SK-N-SH (cell line): ENCODE measurements at regions of chr6 and their contacts with region 1.

Region 1: GRCh38 chr6:112043032-112044007 is 10.6 kb upstream of the CCN6 start:
- DNase-seq: peak; percentile 93
- H3K4me3 ChIP-seq: peak overlapping the region; percentile 68 to 76
- H3K27ac ChIP-seq: peak overlapping the region; percentile 96
- H3K4me1 ChIP-seq: peaks cover 6 to 17% of the 10 kb centered on the region in 2 experiments
- H3K27me3 ChIP-seq: no peaks in the 10 kb centered on the region
- CTCF ChIP-seq: peak; percentile 98
- EP300 ChIP-seq: no peak
- RAD21 ChIP-seq: peak; percentile 97

Region 2: GRCh38 chr6:111691345-111692225 is 351.7 kb before region 1 on chr6:
- CTCF ChIA-PET with region 1: interaction called, 14 read pairs
- POLR2A ChIA-PET with region 1: no interaction called
- DNase-seq: peak; percentile 76
- H3K4me3 ChIP-seq: no peak overlapping the region
- H3K27ac ChIP-seq: peak overlapping the region in 1 of 2 experiments; percentile 90; a peak in 2 of 4 replicates
- H3K4me1 ChIP-seq: peaks cover 0 to 42% of the 10 kb centered on the region in 2 experiments; a peak in 2 of 4 replicates
- H3K27me3 ChIP-seq: no peaks in the 10 kb centered on the region
- CTCF ChIP-seq: no peak
- EP300 ChIP-seq: peak in 1 of 2 experiments; percentile 92; a peak in 2 of 4 replicates
- RAD21 ChIP-seq: peak; percentile 38

Region 3: GRCh38 chr6:111709615-111710398 is 333.5 kb before region 1 on chr6:
- CTCF ChIA-PET with region 1: interaction called, 65 read pairs
- POLR2A ChIA-PET with region 1: interaction called, 3 read pairs
- DNase-seq: peak; percentile 78
- H3K4me3 ChIP-seq: peak overlapping the region in 1 of 2 experiments; percentile 0; a peak in 1 of 4 replicates
- H3K27ac ChIP-seq: peak overlapping the region in 1 of 2 experiments; percentile 60; a peak in 2 of 4 replicates
- H3K4me1 ChIP-seq: peaks cover 5 to 27% of the 10 kb centered on the region in 2 experiments; a peak in 2 of 4 replicates
- H3K27me3 ChIP-seq: no peaks in the 10 kb centered on the region
- CTCF ChIP-seq: peak; percentile 79
- EP300 ChIP-seq: peak in 1 of 2 experiments; percentile 23; a peak in 1 of 4 replicates
- RAD21 ChIP-seq: peak; percentile 94

Region 4: GRCh38 chr6:112029045-112029822 is 14.1 kb before region 1 on chr6:
- CTCF ChIA-PET with region 1: interaction called, 43 read pairs
- POLR2A ChIA-PET with region 1: no interaction called
- DNase-seq: peak; percentile 39
- H3K4me3 ChIP-seq: no peak overlapping the region
- H3K27ac ChIP-seq: no peak overlapping the region
- H3K4me1 ChIP-seq: peaks cover 8 to 10% of the 10 kb centered on the region in 2 experiments; a peak in 2 of 4 replicates
- H3K27me3 ChIP-seq: no peaks in the 10 kb centered on the region
- CTCF ChIP-seq: peak; percentile 79
- EP300 ChIP-seq: no peak
- RAD21 ChIP-seq: peak; percentile 59